WTC11 (cell line): ENCODE measurements at regions of chr3 and their contacts with region 1.

Region 1: DNA sequence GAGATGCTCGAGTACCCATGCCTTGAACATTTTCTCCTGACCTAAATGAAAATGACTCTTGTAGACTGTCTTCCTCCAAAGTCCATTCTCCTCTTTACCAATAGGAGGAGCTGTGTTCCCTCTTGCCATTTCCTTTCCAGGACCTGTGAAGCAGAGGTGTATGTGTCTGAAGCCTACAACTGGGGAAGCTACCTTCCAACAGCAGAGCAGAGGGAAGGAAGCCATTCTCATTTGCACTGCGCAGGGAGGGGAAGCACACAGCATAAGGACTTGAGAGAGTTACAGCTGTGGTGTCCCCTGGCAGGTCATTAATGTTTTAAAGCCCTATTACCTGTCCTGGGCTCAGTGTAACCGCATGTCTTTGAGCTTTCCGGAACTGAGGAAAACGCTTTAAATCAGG is 38.7 kb downstream of the HSPBAP1 start:
- DNase-seq: no peak
- ATAC-seq: peak; percentile 100
- H3K4me3 Mint-ChIP-seq: no peak overlapping the region
- H3K27ac Mint-ChIP-seq: no peak overlapping the region
- H3K4me1 Mint-ChIP-seq: 0 out of 2 replicates have a peak, but pooled peaks cover 2% of the 10 kb centered on the region
- H3K27me3 Mint-ChIP-seq: no peaks in the 10 kb centered on the region
- CTCF ChIP-seq: peak; percentile 67

Region 2: GRCh38 chr3:122774564-122774963 is 19.6 kb after region 1 on chr3:
- CTCF ChIA-PET with region 1: interaction called, 12 read pairs
- POLR2A ChIA-PET with region 1: no interaction called
- DNase-seq: no peak
- ATAC-seq: peak; percentile 86
- H3K4me3 Mint-ChIP-seq: no peak overlapping the region
- H3K27ac Mint-ChIP-seq: no peak overlapping the region
- H3K4me1 Mint-ChIP-seq: peaks cover 9% of the 10 kb centered on the region
- H3K27me3 Mint-ChIP-seq: no peaks in the 10 kb centered on the region
- CTCF ChIP-seq: no peak

Region 3: DNA sequence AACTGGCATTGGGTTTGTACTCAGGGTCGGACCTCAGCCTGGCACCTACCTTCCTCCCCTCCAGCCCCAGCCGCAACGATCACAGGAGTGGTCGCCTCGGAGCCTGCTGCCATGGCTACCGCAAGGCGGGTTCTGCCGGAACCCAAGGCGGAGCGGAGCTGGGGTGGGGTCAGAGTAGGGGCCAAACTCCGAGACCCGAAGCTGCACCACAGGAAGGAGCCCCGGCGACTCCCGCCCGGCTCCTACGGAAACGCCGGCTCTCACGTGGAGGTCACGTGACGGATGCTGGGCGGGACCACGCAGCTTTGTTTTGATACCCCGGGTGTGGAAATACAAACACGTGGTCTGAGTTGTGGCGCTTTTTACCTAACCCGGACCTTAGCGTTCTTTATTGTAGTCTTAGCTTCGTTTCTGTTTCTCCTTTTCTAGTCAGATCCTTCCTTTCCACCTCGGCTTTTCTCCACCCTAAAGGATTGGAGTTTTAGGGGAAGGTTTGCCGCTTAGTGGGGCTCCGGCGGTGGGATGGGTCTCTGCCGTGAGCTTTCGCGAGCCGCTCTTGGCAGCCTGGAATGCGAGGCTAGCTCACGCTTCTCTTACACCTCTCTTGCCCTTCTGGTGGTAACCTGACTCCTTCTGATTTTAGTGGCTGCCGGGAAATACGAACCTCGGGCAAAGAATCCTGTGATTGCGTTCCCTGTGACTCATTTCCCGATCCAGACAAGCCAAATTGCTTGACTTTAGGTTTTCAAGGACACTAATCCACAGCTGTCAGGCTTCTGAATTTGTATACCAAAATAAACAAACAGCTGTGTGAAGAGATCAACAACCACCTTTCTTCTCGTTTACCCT is 38.9 kb after region 1 on chr3 and contains the start of gene HSPBAP1:
- CTCF ChIA-PET with region 1: interaction called, 10 read pairs
- POLR2A ChIA-PET with region 1: no interaction called
- DNase-seq: peak; percentile 92
- ATAC-seq: peak; percentile 83
- H3K4me3 Mint-ChIP-seq: peak within 1 kb of the TSS; percentile 81
- H3K27ac Mint-ChIP-seq: peak within 1 kb of the TSS; percentile 99
- H3K4me1 Mint-ChIP-seq: peaks cover 18% of the 10 kb centered on the region
- H3K27me3 Mint-ChIP-seq: peaks cover 9% of the 10 kb centered on the region
- CTCF ChIP-seq: no peak
- total RNA-seq, gene HSPBAP1: 7.6 to 10.4 TPM (median 9.1 TPM) in 3 replicates

Region 4: GRCh38 chr3:122858373-122858772 is 103.4 kb after region 1 on chr3:
- CTCF ChIA-PET with region 1: interaction called, 10 read pairs
- POLR2A ChIA-PET with region 1: no interaction called
- DNase-seq: no peak
- ATAC-seq: no peak
- H3K4me3 Mint-ChIP-seq: no peak overlapping the region
- H3K27ac Mint-ChIP-seq: no peak overlapping the region
- H3K4me1 Mint-ChIP-seq: no peaks in the 10 kb centered on the region
- H3K27me3 Mint-ChIP-seq: no peaks in the 10 kb centered on the region
- CTCF ChIP-seq: no peak